ENCODE measurements at regions of chr1 and their contacts with region 1.

Region 1: GRCh38 chr1:236489710-236490377 is 33.9 kb upstream of the LGALS8 start:
- DNase-seq: peak; percentile 44 to 61
- H3K4me3 ChIP-seq: no peak overlapping the region
- H3K4me1 ChIP-seq: no peaks in the 10 kb centered on the region; the same call in 1 of the 2 replicates
- H3K27me3 ChIP-seq: no peaks in the 10 kb centered on the region

Region 2: GRCh38 chr1:236113324-236114032 is 376.4 kb before region 1 on chr1:
- in situ Hi-C with region 1: loop called (anchors 5 kb)
- DNase-seq: no peak
- H3K4me3 ChIP-seq: no peak overlapping the region
- H3K4me1 ChIP-seq: no peaks in the 10 kb centered on the region
- H3K27me3 ChIP-seq: no peaks in the 10 kb centered on the region

Region 3: GRCh38 chr1:236590553-236591150 is 100.8 kb after region 1 on chr1:
- in situ Hi-C with region 1: no loop called
- DNase-seq: no peak
- H3K4me3 ChIP-seq: no peak overlapping the region
- H3K4me1 ChIP-seq: no peaks in the 10 kb centered on the region
- H3K27me3 ChIP-seq: no peaks in the 10 kb centered on the region